Activated CD4-positive, alpha-beta memory T cell treated with anti-CD3 and anti-CD28 coated beads for 36 hours (primary cell): ENCODE measurements at regions of chr12 and their contacts with region 1.

Region 1: GRCh38 chr12:26298785-26299621 is 103.6 kb downstream of the SSPN start:
- DNase-seq: no peak
- H3K4me3 Mint-ChIP-seq: no peak overlapping the region
- H3K27ac Mint-ChIP-seq: no peak overlapping the region
- H3K4me1 Mint-ChIP-seq: peaks cover 23% of the 10 kb centered on the region
- H3K27me3 Mint-ChIP-seq: no peaks in the 10 kb centered on the region

Region 2: GRCh38 chr12:26274441-26275312 is 24.3 kb before region 1 on chr12:
- CTCF ChIA-PET with region 1: no interaction called
- POLR2A ChIA-PET with region 1: no interaction called
- intact Hi-C with region 1: loop called (anchors 1 kb)
- DNase-seq: peak; percentile 77
- H3K4me3 Mint-ChIP-seq: no peak overlapping the region
- H3K27ac Mint-ChIP-seq: no peak overlapping the region
- H3K4me1 Mint-ChIP-seq: peaks cover 16% of the 10 kb centered on the region
- H3K27me3 Mint-ChIP-seq: peaks cover 3% of the 10 kb centered on the region

Region 3: GRCh38 chr12:26318661-26319068 is 19.7 kb after region 1 on chr12:
- CTCF ChIA-PET with region 1: no interaction called
- POLR2A ChIA-PET with region 1: no interaction called
- intact Hi-C with region 1: loop called (anchors 1 kb)
- DNase-seq: peak; percentile 20
- H3K4me3 Mint-ChIP-seq: no peak overlapping the region
- H3K27ac Mint-ChIP-seq: no peak overlapping the region
- H3K4me1 Mint-ChIP-seq: peaks cover 8% of the 10 kb centered on the region
- H3K27me3 Mint-ChIP-seq: peaks cover 13% of the 10 kb centered on the region

Region 4: DNA sequence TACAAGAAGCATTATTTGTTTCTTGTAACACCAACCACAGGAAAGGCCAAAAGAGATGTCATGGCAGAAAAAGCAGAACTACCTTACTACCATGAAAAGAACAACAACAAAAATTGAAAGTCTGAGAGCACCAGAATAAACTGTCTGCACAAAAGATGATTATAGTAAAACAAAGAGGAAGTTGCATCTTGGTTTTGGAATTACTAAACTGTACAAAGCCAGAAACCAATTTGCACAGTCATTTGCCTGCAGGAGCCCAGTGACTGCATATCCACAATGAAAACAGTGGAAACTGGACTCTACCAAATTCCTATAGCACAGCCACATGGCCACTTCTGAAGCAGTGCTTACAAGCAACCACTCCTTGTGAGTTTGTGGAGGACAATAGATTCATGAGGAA is 172.6 kb after region 1 on chr12:
- CTCF ChIA-PET with region 1: no interaction called
- POLR2A ChIA-PET with region 1: no interaction called
- intact Hi-C with region 1: loop called (anchors 10 kb)
- DNase-seq: peak; percentile 28
- H3K4me3 Mint-ChIP-seq: no peak overlapping the region
- H3K27ac Mint-ChIP-seq: peak overlapping the region; percentile 56
- H3K4me1 Mint-ChIP-seq: peaks cover 11% of the 10 kb centered on the region
- H3K27me3 Mint-ChIP-seq: no peaks in the 10 kb centered on the region